Endothelial cell of umbilical vein (primary cell): ENCODE measurements at regions of chr1 and their contacts with region 1.

Region 1: GRCh38 chr1:246497331-246497915 is 9.7 kb downstream of the SMYD3 start:
- DNase-seq: peak; percentile 77
- H3K4me3 ChIP-seq: no peak overlapping the region
- H3K27ac ChIP-seq: no peak overlapping the region
- H3K4me1 ChIP-seq: no peaks in the 10 kb centered on the region
- H3K27me3 ChIP-seq: no peaks in the 10 kb centered on the region
- CTCF ChIP-seq: peak; percentile 38 to 45
- POLR2A ChIP-seq: no peak

Region 2: DNA sequence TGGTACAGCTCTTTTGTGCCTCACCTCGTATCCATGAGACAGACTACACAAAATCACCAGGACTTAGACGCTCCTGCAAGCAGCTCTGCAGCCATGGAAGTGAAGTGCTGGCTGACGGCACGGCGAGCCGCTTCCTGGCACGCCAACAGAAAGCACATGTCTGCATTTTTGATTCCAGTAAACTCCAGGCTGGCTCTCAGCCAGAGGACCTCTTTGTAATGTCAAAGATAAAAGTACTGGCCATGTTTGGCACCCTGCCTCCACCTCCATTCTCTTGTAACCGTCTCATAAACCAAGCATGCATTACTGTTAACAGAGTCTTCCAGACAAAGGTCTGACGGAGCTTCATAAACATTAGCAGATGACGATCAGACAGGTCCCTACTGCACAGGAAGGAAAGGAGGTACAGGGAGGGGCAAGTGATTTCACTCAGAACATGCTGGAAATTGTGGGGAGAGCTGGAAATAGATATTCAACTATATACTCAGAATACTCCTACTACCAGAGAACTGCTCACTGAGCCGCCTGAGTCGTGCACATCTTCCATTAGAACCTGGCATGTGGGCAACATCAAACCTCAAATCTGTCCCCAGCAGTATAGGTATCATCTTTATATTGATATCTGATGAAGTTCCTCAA is 622.4 kb before region 1 on chr1:
- CTCF ChIA-PET with region 1: no interaction called
- POLR2A ChIA-PET with region 1: no interaction called
- dilution Hi-C with region 1: no loop called
- intact Hi-C with region 1: loop called (anchors 5 kb)
- DNase-seq: peak; percentile 95
- H3K4me3 ChIP-seq: no peak overlapping the region
- H3K27ac ChIP-seq: peak overlapping the region; percentile 50
- H3K4me1 ChIP-seq: peaks cover 22% of the 10 kb centered on the region
- H3K27me3 ChIP-seq: no peaks in the 10 kb centered on the region
- CTCF ChIP-seq: no peak
- POLR2A ChIP-seq: no peak

Region 3: DNA sequence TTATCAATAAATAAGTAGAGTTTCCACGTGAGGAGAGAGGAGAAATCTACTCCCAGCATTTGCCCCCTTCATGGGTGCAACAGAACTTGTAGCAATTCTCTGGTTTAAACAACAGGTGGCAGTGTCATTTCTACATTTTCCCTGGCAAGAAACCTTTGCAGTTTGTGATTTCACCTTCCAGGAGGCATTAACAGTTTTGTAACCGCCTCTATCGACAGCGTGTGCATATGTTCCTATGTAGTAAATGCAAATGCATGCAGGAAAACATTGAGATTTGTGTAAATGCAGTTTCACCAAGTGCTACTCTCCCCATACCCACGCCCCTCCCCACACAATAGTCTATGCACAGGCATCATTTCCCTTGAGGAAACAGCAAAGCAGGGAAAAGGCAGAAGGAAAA is 485.1 kb before region 1 on chr1:
- CTCF ChIA-PET with region 1: interaction called, 5 read pairs
- POLR2A ChIA-PET with region 1: no interaction called
- dilution Hi-C with region 1: no loop called
- intact Hi-C with region 1: loop called (anchors 1 kb)
- DNase-seq: peak; percentile 63
- H3K4me3 ChIP-seq: no peak overlapping the region
- H3K27ac ChIP-seq: no peak overlapping the region
- H3K4me1 ChIP-seq: no peaks in the 10 kb centered on the region
- H3K27me3 ChIP-seq: no peaks in the 10 kb centered on the region
- CTCF ChIP-seq: peak; percentile 48 to 54
- POLR2A ChIP-seq: no peak

Region 4: GRCh38 chr1:246532519-246532918 is 35.1 kb after region 1 on chr1:
- CTCF ChIA-PET with region 1: interaction called, 12 read pairs
- POLR2A ChIA-PET with region 1: no interaction called
- dilution Hi-C with region 1: no loop called
- intact Hi-C with region 1: no loop called
- DNase-seq: no peak
- H3K4me3 ChIP-seq: no peak overlapping the region
- H3K27ac ChIP-seq: no peak overlapping the region
- H3K4me1 ChIP-seq: no peaks in the 10 kb centered on the region
- H3K27me3 ChIP-seq: peaks cover 4 to 8% of the 10 kb centered on the region in 2 experiments
- CTCF ChIP-seq: no peak
- POLR2A ChIP-seq: no peak

Region 5: GRCh38 chr1:246699095-246699735 is 201.8 kb after region 1 on chr1:
- CTCF ChIA-PET with region 1: interaction called, 13 read pairs
- POLR2A ChIA-PET with region 1: no interaction called
- dilution Hi-C with region 1: no loop called
- intact Hi-C with region 1: loop called (anchors 1 kb)
- DNase-seq: peak; percentile 93
- H3K4me3 ChIP-seq: no peak overlapping the region
- H3K27ac ChIP-seq: peak overlapping the region; percentile 53
- H3K4me1 ChIP-seq: peaks cover 5% of the 10 kb centered on the region
- H3K27me3 ChIP-seq: no peaks in the 10 kb centered on the region
- CTCF ChIP-seq: peak; percentile 91 to 92
- POLR2A ChIP-seq: no peak

Region 6: DNA sequence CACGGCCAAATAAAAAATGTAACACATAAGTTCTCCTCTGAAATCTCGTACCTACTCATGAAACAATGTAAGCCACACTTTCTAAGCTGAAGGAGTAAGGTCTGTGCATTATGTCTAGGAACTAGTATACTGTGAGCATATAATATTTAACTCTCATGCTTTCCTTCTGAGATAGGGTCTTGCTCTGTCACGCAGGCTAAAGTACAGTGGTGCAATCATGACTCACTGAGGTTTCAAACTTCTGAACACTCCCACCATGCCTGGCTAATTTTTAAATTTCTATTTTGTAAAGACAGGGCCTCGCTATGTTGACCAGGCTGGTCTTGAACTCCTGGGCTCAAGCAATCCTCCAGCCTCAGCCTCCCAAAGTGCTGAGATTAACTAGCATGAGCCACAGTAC is 363.0 kb after region 1 on chr1:
- CTCF ChIA-PET with region 1: no interaction called
- POLR2A ChIA-PET with region 1: no interaction called
- dilution Hi-C with region 1: no loop called
- intact Hi-C with region 1: no loop called
- DNase-seq: no peak
- H3K4me3 ChIP-seq: no peak overlapping the region
- H3K27ac ChIP-seq: no peak overlapping the region
- H3K4me1 ChIP-seq: no peaks in the 10 kb centered on the region
- H3K27me3 ChIP-seq: no peaks in the 10 kb centered on the region
- CTCF ChIP-seq: no peak
- POLR2A ChIP-seq: no peak